ENCODE measurements at regions of chr17 and their contacts with region 1.

Region 1: GRCh38 chr17:3865176-3865575 is 19.1 kb upstream of the NCBP3 start:
- DNase-seq: no peak
- H3K4me3 ChIP-seq: no peak overlapping the region
- H3K27ac ChIP-seq: no peak overlapping the region
- H3K4me1 ChIP-seq: no peaks in the 10 kb centered on the region
- H3K27me3 ChIP-seq: no peaks in the 10 kb centered on the region
- CTCF ChIP-seq: no peak
- POLR2A ChIP-seq: no peak

Region 2: GRCh38 chr17:3827124-3827773 is 37.9 kb before region 1 on chr17:
- CTCF ChIA-PET with region 1: no interaction called
- POLR2A ChIA-PET with region 1: no interaction called
- dilution Hi-C with region 1: no loop called
- intact Hi-C with region 1: no loop called
- DNase-seq: peak; percentile 79
- H3K4me3 ChIP-seq: no peak overlapping the region
- H3K27ac ChIP-seq: no peak overlapping the region
- H3K4me1 ChIP-seq: no peaks in the 10 kb centered on the region
- H3K27me3 ChIP-seq: no peaks in the 10 kb centered on the region
- CTCF ChIP-seq: peak; percentile 64 to 71
- POLR2A ChIP-seq: no peak

Region 3: GRCh38 chr17:3893003-3893719 is 28.0 kb after region 1 on chr17 and contains the start of gene CAMKK1:
- CTCF ChIA-PET with region 1: interaction called, 6 read pairs
- POLR2A ChIA-PET with region 1: no interaction called
- dilution Hi-C with region 1: no loop called
- intact Hi-C with region 1: loop called (anchors 2 kb)
- DNase-seq: peak; percentile 83
- H3K4me3 ChIP-seq: peak within 1 kb of the TSS; percentile 41 to 59 (median 52)
- H3K27ac ChIP-seq: no peak within 1 kb of the TSS
- H3K4me1 ChIP-seq: peaks cover 52% of the 10 kb centered on the region
- H3K27me3 ChIP-seq: no peaks in the 10 kb centered on the region
- CTCF ChIP-seq: no peak
- POLR2A ChIP-seq: no peak
- total RNA-seq, gene CAMKK1: 5.7 and 6.1 TPM in 2 replicates

Region 4: DNA sequence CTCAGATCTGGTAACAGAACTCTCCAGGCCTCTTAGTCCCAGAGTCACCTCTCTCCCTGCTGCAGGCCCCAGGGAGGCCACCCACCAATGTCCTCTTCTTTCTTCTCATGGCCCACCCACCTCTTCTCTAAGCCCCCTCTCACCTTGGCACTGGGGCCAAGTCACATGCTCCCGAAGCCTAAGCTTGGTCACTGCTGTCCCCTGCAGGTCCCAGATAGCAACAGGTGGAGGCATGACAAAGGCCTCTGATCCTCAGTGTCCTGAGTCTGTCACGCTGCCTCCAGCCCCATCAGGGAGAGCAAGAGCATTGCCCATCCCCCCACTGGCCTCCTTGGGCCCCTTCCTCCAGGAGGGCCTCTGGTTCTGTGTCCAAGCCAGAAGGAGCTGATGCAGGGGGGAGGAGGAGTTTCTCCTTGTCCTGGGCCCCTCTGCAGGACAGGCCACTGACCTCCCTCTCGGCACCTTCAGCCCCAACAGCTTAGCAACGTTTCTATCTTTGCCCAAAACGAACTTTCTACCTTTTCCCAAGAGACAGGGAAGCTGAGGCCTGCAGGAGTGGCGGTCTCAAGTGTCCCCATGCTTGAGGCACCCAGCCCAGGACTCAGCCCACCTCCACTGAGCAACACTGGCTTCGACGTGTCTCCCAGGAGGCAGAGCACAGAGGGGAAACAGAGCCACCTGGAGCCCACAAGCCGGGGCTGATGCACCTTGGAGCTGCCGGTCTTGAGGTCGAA is 42.5 kb after region 1 on chr17:
- CTCF ChIA-PET with region 1: interaction called, 13 read pairs
- POLR2A ChIA-PET with region 1: no interaction called
- dilution Hi-C with region 1: no loop called
- intact Hi-C with region 1: loop called (anchors 1 kb)
- DNase-seq: no peak
- H3K4me3 ChIP-seq: no peak overlapping the region
- H3K27ac ChIP-seq: no peak overlapping the region
- H3K4me1 ChIP-seq: no peaks in the 10 kb centered on the region
- H3K27me3 ChIP-seq: no peaks in the 10 kb centered on the region
- CTCF ChIP-seq: peak; percentile 20 to 26
- POLR2A ChIP-seq: no peak

Region 5: GRCh38 chr17:4004517-4005295 is 139.5 kb after region 1 on chr17:
- CTCF ChIA-PET with region 1: no interaction called
- POLR2A ChIA-PET with region 1: no interaction called
- dilution Hi-C with region 1: no loop called
- intact Hi-C with region 1: loop called (anchors 1 kb)
- DNase-seq: peak; percentile 49
- H3K4me3 ChIP-seq: no peak overlapping the region
- H3K27ac ChIP-seq: no peak overlapping the region
- H3K4me1 ChIP-seq: peaks cover 9% of the 10 kb centered on the region
- H3K27me3 ChIP-seq: no peaks in the 10 kb centered on the region
- CTCF ChIP-seq: peak; percentile 90 to 92
- POLR2A ChIP-seq: no peak